GM23248 (cell line): ENCODE measurements at regions of chr6 and their contacts with region 1.

Region 1: GRCh38 chr6:2989332-2990247 is 10.1 kb upstream of the NQO2 start:
- DNase-seq: peak; percentile 99
- H3K4me3 ChIP-seq: peak overlapping the region; percentile 79
- H3K27ac ChIP-seq: peak overlapping the region; percentile 99
- H3K4me1 ChIP-seq: peaks cover 24% of the 10 kb centered on the region
- H3K27me3 ChIP-seq: no peaks in the 10 kb centered on the region

Region 2: GRCh38 chr6:3057063-3057770 is 67.6 kb after region 1 on chr6:
- in situ Hi-C with region 1: loop called (anchors 5 kb)
- DNase-seq: no peak
- H3K4me3 ChIP-seq: no peak overlapping the region
- H3K27ac ChIP-seq: no peak overlapping the region
- H3K4me1 ChIP-seq: no peaks in the 10 kb centered on the region
- H3K27me3 ChIP-seq: no peaks in the 10 kb centered on the region